Left cardiac atrium (tissue), 4 donors: ENCODE measurements at regions of chr6 and their contacts with region 1.

Region 1: DNA sequence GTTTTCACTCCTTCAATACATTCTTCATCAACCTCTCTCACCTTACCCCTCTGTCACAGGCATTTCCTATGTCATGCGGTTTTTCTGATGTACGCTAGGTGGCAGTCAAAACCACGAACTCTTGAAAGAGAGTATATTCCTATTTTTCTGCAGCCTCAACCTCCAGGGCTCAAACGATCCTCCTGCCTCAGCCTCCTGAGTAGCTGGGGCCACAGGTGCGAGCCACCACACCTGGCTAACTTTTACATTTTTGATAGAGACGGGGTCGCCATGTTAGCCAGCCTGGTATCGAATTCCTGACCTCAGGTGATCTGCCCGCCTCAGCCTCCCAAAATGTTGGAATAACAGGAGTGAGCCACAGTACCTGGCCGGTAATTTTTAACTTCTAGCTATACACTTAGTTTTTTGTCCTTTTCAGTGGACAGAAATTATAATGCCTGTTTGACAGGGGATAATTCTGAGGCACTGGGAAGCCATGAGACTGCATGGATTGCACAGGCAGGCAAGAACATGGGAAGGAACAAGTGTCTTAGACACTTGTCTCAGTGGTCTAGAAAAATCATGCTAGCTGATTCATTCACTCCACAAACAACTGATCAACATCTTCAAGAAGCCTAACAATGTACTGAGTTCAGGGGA is 22.5 kb upstream of the HFE start:
- DNase-seq: no peak
- ATAC-seq: peak; percentile 62 to 74

Region 2: GRCh38 chr6:25590986-25591385 is 473.8 kb before region 1 on chr6:
- intact Hi-C with region 1: no loop called
- DNase-seq: no peak
- ATAC-seq: no peak

Region 3: GRCh38 chr6:25835442-25836283 is 229.1 kb before region 1 on chr6:
- intact Hi-C with region 1: no loop called
- DNase-seq: peak; percentile 72
- ATAC-seq: peak; percentile 15 to 67

Region 4: DNA sequence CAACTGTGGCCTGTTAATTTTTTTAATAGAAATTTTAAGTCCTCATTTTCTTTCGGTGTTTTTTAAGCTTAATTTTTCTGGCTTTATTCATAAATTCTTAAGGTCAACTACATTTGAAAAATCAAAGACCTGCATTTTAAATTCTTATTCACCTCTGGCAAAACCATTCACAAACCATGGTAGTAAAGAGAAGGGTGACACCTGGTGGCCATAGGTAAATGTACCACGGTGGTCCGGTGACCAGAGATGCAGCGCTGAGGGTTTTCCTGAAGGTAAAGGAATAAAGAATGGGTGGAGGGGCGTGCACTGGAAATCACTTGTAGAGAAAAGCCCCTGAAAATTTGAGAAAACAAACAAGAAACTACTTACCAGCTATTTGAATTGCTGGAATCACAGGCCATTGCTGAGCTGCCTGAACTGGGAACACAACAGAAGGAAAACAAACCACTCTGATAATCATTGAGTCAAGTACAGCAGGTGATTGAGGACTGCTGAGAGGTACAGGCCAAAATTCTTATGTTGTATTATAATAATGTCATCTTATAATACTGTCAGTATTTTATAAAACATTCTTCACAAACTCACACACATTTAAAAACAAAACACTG is 32.6 kb after region 1 on chr6:
- intact Hi-C with region 1: loop called (anchors 1 to 5 kb)
- DNase-seq: peak; percentile 68
- ATAC-seq: peak; percentile 77 to 78

Region 5: DNA sequence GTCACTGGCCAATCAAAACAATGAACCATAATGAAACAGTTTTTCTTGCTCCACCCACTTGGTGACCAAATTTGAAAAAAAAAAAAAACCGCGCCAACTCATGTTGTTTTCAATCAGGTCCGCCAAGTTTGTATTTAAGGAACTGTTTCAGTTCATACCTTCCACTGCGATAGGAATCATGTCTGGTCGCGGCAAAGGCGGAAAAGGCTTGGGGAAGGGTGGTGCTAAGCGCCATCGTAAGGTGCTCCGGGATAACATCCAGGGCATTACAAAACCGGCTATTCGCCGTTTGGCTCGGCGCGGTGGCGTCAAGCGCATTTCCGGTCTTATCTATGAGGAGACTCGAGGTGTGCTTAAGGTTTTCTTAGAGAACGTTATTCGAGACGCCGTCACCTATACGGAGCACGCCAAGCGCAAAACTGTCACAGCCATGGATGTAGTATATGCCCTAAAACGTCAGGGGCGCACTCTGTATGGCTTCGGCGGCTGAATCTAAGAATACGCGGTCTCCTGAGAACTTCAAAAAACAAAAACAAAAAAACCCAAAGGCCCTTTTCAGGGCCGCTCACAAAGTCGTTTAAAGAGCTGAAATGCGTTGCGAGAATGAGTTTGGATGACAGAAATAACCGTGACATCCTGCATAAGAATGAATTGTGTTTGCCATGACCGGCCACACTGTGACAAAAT is 39.2 kb after region 1 on chr6:
- intact Hi-C with region 1: loop called in 1 of 2 experiments (anchors 5 kb)
- DNase-seq: peak; percentile 86
- ATAC-seq: peak; percentile 92 to 94

Region 6: DNA sequence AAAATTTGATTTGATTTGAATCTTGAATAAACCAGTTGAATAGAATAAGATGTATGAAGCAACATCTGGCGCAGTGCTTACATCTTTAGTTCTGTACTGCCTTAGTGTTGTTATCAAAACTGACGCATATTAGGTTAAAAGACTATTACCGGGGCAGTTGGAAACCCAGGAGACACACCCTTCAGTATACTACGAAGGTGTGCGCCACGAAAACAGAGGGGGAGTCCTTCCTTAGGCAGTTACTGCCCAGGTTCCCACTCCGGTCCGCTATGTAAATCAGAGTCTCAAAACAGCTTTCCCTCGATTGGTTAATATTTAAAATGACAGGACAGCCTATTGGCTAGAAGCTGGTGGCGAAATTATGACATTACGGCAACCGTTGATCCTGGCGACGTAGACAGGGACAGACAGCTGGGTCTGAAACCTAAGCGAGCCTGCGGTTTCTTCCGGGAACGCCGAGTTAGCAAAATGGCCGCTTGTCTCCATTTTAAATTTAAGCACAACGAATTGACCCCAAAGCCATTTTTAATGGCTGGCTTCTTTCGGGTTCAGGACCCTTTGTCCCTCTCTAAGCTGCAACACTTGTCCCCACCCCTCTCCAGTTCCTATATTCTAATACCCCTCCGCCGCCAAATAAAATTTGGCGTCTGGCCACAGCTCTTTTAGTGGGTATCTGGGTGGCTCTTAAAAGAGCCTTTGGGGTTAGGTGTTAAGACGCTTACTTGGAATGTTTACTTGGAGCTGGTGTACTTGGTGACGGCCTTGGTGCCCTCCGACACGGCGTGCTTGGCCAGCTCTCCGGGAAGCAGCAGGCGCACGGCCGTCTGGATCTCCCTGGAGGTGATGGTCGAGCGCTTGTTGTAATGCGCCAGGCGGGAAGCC is 58.3 kb after region 1 on chr6:
- intact Hi-C with region 1: no loop called
- DNase-seq: peak; percentile 97
- ATAC-seq: peak; percentile 87 to 88

Region 7: GRCh38 chr6:26342106-26343004 is 277.6 kb after region 1 on chr6:
- intact Hi-C with region 1: no loop called
- DNase-seq: no peak
- ATAC-seq: no peak